Lower leg skin (tissue), 4 donors: ENCODE measurements at regions of chr7 and their contacts with region 1.

Region 1: DNA sequence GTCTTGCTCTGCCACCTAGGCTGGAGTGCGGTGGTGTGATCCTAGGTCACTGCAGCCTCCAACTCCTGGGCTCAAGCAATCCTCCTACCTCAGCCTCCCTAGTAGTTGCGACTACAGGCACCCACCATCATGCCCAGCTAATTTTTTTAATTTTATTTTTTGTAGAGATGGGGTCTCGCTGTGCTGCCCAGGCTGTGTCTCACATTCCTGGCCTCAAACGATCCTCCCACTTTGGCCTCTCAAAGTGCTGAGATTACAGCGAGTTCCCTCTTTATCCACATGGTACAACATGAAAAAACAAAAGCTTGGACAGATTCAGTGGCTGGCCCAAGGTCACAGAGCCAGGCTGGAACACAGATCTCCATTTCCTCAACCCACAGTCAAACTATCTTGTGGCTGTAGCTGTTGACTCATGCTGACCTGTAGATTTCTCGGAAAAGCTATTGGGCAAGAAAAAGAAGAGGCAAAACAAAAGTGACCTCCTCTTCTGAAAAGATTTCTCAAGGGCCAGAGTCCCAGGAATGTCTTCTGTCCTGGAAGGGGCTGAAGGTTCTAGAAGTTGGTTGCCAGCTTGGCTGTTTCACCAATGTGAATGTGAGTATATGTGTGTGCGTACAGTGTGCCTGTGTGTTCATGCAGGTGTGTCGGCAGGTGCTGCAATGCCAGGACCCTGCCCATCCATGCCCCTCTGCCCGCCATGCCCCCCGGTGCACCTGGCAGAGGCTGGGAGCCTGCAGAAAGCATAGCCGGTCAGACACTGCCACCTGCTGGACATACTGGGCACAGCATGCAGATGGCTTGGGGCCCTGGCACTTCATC is 28.4 kb downstream of the TMEM130 start:
- DNase-seq: peak; percentile 58 to 91
- H3K4me3 ChIP-seq: no peak overlapping the region
- CTCF ChIP-seq: peak in 1 of 3 donors; percentile 89
- POLR2A ChIP-seq: no peak

Region 2: DNA sequence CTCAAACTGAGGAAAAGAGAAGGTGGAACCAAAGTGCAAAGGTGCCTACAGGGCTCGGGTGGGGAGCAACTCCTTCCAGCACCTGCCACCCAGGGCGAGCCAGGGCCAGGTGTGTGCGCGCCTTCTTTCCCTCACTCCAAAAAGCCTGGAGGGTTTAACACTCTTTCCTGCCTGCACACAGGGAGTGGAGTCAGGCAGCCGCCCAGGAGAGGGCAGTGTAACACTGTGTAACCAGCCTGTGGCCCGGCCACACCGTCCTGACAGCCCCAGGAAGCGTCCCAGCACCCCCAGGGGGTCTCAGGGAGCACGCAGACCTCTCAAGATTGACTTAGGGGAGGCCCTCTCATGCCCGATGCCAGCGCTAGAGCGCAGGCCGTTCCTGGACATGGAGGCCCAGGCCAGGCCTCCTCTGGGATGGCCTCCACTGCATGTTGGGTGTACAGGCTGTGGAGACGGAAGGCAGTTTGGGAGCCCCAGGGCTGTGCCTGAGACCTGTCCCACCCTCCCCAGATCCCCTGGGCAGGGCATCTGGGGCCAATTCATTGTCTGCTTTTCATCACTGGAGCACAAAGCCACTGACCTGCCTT is 546.5 kb before region 1 on chr7:
- intact Hi-C with region 1: loop called (anchors 10 kb)
- DNase-seq: peak in 1 of 2 donors; percentile 92
- H3K4me3 ChIP-seq: no peak overlapping the region
- CTCF ChIP-seq: no peak
- POLR2A ChIP-seq: no peak

Region 3: GRCh38 chr7:98439484-98439883 is 401.9 kb before region 1 on chr7:
- intact Hi-C with region 1: loop called (anchors 5 kb)
- DNase-seq: no peak
- H3K4me3 ChIP-seq: no peak overlapping the region
- CTCF ChIP-seq: no peak
- POLR2A ChIP-seq: no peak

Region 4: GRCh38 chr7:98949336-98950044 is 108.1 kb after region 1 on chr7:
- intact Hi-C with region 1: no loop called
- DNase-seq: peak in 1 of 2 donors; percentile 69
- H3K4me3 ChIP-seq: no peak overlapping the region
- CTCF ChIP-seq: no peak
- POLR2A ChIP-seq: no peak